Posterior vena cava (tissue), 2 donors: ENCODE measurements at regions of chr20 and their contacts with region 1.

Region 1: GRCh38 chr20:62386383-62387218 is at the start of gene RPS21:
- DNase-seq: peak; percentile 99
- total RNA-seq, gene RPS21: 1,227 to 1,253 TPM

Region 2: GRCh38 chr20:62182613-62183425 is 203.8 kb before region 1 on chr20 and contains the start of gene MTG2:
- intact Hi-C with region 1: loop called in 1 of 2 experiments (anchors 5 kb)
- DNase-seq: peak; percentile 98
- total RNA-seq, gene MTG2: 19.8 to 23.8 TPM

Region 3: GRCh38 chr20:62302341-62303058 is 84.1 kb before region 1 on chr20 and contains the start of gene ADRM1:
- intact Hi-C with region 1: loop called (anchors 2 to 5 kb)
- DNase-seq: peak; percentile 99
- total RNA-seq, gene ADRM1: 60.9 to 70.3 TPM

Region 4: GRCh38 chr20:62344782-62345181 is 41.8 kb before region 1 on chr20:
- intact Hi-C with region 1: loop called in 1 of 2 experiments (anchors 5 kb)
- DNase-seq: no peak

Region 5: DNA sequence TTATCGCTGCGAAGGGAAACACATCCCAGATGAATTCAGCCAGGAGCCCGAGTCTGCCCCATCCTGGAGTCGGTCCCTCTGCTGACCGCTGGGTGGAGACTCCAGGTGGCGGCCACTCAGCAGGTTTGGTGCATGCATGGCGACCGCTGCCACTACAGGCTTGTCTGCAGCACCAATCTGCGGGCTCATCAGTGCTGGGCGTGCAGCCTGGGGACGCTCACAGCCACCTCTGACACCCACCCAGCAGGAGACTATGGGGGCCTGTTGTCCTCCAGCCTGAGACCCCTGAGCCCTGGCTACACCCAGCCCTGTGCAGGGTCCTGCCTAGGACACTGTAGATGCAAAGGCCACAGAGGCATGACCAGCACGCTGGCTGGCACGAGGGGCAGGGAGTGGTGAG is 129.7 kb after region 1 on chr20:
- intact Hi-C with region 1: no loop called
- DNase-seq: no peak

Region 6: GRCh38 chr20:62557445-62557844 is 170.8 kb after region 1 on chr20:
- intact Hi-C with region 1: no loop called
- DNase-seq: no peak